Dorsolateral prefrontal cortex (tissue), 120 donors: ENCODE measurements at regions of chr7 and their contacts with region 1.

Region 1: DNA sequence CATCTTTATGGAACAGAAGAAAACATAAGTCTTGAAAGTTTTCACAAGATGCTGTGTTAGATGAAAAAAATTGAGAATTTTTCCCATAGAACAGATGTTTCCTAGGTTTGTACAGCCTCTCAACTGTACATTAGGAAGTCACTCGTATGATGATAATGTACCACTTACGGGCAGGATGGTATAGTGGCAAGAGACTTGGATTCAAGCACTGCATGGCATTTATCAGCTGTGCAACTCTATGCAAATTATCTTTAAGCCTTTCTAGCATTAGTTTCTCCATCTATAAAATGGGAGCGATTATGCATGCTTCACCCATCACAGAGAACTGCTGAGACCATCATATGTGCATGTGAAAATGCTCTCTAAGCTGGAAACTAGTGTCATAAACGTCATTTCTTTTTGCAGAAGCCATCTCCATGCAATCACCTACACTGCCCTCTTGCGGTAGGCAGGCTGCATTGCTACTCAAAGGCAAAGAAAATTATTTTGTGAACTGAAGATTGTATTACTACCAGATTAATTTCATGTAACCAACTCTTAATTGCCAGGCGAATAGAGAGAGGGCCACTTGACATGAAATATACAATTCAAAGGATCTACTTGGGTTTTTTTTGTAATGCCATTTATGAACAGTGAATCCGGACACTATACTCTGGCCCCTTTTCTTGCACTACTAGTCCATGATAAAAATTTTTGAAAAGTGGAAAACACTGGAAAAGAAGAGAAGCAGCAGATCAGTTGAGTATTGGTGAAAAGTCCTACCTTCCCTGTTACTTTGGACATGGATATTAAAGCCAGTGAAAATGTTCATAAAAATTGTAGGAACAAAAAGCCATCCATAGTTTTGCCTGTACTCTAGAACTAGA is 102.3 kb downstream of the JAZF1 start:
- DNase-seq: peak in 5 of 10 donors; percentile 37 to 63 (median 40)
- H3K4me3 ChIP-seq: no peak overlapping the region
- H3K27ac ChIP-seq: peak overlapping the region in 1 of 59 donors; percentile 0
- H3K27me3 ChIP-seq: no peaks in the 10 kb centered on the region
- CTCF ChIP-seq: peak; percentile 82 to 98 (median 93)

Region 2: DNA sequence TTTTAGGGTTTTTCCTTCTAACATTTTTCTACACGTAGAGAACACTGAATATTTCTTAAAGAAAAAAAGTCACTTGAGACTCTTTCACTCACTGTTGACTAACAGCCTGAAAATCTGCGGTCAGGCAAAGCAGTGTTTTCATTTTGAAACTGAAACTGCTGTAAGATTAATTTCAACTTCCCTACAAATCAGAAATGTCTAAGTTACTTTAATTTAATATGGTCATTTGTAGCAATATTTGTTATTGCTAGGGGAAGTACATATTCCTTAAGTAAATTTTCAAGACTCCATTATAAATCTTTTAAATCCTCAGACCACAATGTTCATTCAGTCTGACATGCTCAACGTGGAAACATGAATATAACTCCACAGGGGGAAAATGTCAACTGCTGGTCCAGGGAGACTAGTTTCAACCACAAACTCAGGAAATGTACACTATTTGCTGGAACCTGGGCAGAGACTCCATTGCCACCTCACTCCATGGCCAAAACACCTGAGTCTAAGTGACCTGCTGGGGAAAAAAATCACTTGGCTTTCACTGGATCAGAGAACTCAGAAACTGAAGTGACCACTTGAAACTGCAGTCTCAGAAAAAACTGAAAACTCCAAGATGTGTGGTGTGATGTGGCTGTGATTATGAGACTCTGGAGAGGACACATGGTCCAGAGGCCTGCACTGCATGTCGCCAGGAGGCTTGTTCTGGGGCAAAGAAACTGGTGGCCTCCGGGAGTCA is 177.1 kb before region 1 on chr7:
- intact Hi-C with region 1: no loop called
- DNase-seq: no peak
- H3K4me3 ChIP-seq: peak overlapping the region in 9 of 59 donors; percentile 3 to 23 (median 12)
- H3K27ac ChIP-seq: peak overlapping the region in 5 of 59 donors; percentile 0 to 46 (median 10)
- H3K27me3 ChIP-seq: no peaks in the 10 kb centered on the region
- CTCF ChIP-seq: no peak

Region 3: GRCh38 chr7:28029051-28029450 is 49.2 kb before region 1 on chr7:
- intact Hi-C with region 1: loop called in 1 of 2 experiments (anchors 5 kb)
- DNase-seq: no peak
- H3K4me3 ChIP-seq: no peak overlapping the region
- H3K27ac ChIP-seq: peak overlapping the region in 8 of 59 donors; percentile 9 to 67 (median 38)
- H3K27me3 ChIP-seq: no peaks in the 10 kb centered on the region
- CTCF ChIP-seq: no peak